ENCODE measurements at regions of chr11 and their contacts with region 1.

Region 1: GRCh38 chr11:110429731-110430266 is at the start of gene FDX1:
- DNase-seq: peak; percentile 22 to 89
- H3K4me3 ChIP-seq: peak within 1 kb of the TSS; percentile 95 to 98
- H3K27ac ChIP-seq: peak within 1 kb of the TSS; percentile 87 to 96
- H3K4me1 ChIP-seq: peaks cover 0 to 17% of the 10 kb centered on the region in 2 donors
- H3K27me3 ChIP-seq: no peaks in the 10 kb centered on the region
- CTCF ChIP-seq: peak; percentile 31 to 81 (median 54)
- total RNA-seq, gene FDX1: 17.6 TPM

Region 2: DNA sequence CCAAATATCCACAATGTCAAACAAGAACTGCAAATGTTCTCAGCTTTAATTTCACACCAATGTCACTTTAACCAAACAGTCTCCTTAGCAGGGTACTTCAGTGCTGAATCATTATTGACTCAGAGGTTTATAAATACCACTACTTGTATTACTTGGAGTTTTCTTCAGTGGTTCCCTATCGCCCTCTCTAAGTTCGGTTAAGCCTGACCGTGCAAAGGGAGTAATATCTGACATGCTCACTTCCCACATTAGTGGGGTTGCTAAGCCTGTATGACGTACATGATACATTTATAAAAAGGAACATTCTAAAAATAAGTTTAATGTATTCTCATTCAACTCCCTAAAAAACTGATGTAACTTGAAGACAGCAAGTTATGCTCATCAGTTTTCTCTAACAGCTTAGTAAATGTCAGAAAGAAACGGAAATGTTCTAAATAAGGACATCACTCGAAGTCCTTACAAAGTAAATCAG is 429.7 kb before region 1 on chr11:
- intact Hi-C with region 1: loop called (anchors 10 kb)
- DNase-seq: peak in 1 of 2 donors; percentile 66
- H3K4me3 ChIP-seq: no peak overlapping the region
- H3K27ac ChIP-seq: peak overlapping the region; percentile 10 to 45
- H3K4me1 ChIP-seq: peaks cover 0 to 6% of the 10 kb centered on the region in 2 donors
- H3K27me3 ChIP-seq: no peaks in the 10 kb centered on the region
- CTCF ChIP-seq: no peak

Region 3: DNA sequence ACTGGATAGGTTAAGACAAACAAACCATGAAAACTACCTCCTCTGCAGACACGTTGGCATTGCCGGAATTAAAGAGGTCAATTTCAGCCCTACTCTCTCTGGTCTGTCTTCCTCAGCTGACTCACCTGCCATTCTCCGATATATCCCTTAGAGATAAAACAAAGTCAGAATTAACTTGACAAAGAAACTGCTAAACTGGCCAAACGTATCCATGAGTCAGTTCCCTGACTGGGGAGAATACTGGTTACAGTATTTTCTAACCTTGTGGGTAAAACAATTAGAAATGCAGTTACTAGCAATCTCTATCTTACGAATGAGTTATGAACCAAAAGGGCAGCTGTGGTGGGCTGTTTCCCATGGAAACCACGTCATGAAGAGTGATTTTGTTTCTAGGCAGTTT is 229.6 kb before region 1 on chr11:
- intact Hi-C with region 1: loop called (anchors 1 kb)
- DNase-seq: no peak
- H3K4me3 ChIP-seq: no peak overlapping the region
- H3K27ac ChIP-seq: no peak overlapping the region
- H3K4me1 ChIP-seq: no peaks in the 10 kb centered on the region
- H3K27me3 ChIP-seq: no peaks in the 10 kb centered on the region
- CTCF ChIP-seq: no peak

Region 4: DNA sequence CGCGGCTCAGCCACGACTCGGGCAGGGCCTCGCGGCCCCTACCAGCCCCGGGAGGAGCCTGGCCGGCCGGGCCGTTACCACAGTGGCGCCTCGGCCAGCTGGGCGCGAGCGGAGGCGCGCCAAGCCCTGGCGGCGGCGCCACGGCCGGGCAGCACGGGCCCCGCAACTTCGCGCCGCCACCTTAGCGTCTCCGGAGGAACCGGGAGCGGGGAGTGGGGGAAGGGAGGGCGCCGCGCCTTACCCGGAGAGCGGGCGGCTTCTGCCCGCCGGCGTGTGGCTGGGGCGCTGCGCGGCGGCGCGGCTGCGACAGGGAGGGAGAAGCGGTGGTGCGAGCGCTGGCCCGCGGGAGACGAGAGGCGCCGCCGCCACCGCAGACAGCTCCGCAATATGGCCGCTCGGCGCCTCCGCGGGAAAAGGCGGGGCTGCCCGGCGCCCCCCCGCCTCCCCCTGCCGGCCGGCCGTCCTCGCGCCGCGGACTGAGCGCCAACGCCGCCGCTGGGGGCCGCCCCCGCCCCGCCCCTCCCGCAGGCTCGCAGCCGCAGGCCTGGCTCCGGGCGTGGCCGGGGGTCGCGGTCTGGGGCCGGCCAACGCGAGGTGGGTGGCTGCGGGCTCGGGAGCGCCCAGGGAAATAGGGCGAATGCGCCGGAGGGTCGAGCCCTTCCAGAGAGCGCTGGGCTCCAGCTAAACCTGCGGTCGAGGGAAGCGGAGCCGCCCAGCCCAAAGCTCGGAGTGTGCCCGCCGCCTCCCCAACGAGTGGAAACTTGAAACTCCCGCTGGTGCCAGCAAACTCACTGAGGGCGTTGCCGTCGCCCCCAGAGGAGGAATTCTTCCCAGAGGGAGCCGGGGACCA is 133.3 kb before region 1 on chr11 and contains the start of gene RDX:
- intact Hi-C with region 1: loop called (anchors 1 kb)
- DNase-seq: peak in 1 of 2 donors; percentile 82
- H3K4me3 ChIP-seq: peak within 1 kb of the TSS; percentile 83 to 95
- H3K27ac ChIP-seq: peak within 1 kb of the TSS; percentile 87 to 95
- H3K4me1 ChIP-seq: peaks cover 5 to 18% of the 10 kb centered on the region in 2 donors
- H3K27me3 ChIP-seq: no peaks in the 10 kb centered on the region
- CTCF ChIP-seq: peak in 1 of 3 experiments; percentile 17
- total RNA-seq, gene RDX: 105 TPM

Region 5: DNA sequence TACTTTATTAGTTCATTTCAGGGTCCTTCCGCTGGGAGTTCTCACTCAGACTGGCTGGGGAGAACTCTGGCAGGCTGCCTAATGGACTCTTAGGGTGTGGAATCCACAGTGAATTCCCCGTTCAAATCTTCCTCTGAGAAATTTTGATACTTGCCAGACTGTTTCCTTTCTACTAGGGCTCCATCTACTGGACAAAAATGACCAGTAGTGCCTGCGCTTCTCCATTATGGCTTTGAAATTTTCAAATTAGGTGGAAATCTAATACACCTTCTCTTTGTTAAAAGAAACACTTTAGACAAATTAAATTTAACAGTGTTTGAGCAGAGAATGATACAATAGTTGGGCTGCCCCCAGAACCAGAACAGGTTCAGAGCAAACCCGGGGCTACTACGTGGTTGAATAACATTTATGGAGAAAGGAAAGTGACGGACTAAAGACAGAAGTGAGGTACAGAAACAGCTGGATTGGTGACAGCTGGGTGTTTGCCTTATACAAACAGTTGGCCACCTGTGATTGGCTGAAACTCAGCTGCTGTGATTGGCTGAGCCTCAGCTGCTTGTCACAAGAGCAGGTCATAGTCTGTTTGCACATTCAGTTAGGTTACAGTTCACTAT is 53.0 kb before region 1 on chr11:
- intact Hi-C with region 1: loop called (anchors 1 kb)
- DNase-seq: peak; percentile 39 to 79
- H3K4me3 ChIP-seq: peak overlapping the region in 1 of 2 donors; percentile 24
- H3K27ac ChIP-seq: peak overlapping the region in 1 of 2 donors; percentile 29
- H3K4me1 ChIP-seq: peaks cover 0 to 6% of the 10 kb centered on the region in 2 donors
- H3K27me3 ChIP-seq: no peaks in the 10 kb centered on the region
- CTCF ChIP-seq: peak; percentile 41 to 81 (median 71)